OCI-LY7 (cell line): ENCODE measurements at regions of chr12 and their contacts with region 1.

Region 1: GRCh38 chr12:114508529-114509129 is 102.7 kb upstream of the TBX5 start:
- DNase-seq: peak; percentile 65
- H3K4me3 ChIP-seq: no peak overlapping the region
- H3K27ac ChIP-seq: no peak overlapping the region
- H3K4me1 ChIP-seq: no peaks in the 10 kb centered on the region
- CTCF ChIP-seq: peak; percentile 92

Region 2: DNA sequence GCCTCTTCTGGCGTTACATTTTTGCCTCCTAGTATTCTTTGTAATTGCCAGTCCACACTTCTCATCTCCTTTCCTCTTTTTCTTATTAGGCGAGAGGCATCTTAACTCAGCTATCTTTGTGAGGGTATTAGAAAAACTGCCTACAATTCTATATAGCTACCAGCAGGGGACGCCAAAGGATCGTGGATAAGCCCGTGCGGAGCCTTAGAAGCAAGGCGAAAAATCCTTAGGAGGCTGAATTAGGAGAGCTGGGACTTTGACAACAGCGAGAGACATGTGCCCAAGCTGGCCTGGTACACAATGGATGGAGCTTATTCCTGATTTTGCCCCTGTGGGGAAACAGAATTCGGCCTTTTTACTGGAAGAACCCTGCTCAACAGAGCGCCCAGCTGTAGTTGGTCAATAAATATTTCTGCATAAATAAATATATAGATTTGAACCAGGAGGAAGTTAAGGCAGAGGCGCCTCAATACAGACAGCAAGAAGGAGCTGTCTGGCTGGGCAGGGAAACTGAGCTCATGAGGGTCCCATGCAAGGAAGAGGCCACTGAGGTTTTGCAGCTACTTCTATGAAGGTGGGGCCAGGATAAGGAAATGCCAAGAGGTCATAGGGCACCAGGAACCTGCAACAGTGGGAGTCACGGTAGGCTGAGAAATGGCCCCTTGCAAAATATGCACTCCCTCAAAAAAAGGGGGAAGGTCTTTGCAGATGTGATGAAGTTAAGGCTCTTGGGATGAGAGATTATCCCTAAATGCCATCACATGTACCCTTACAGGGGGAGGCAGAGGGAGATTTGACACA is 527.9 kb before region 1 on chr12:
- CTCF ChIA-PET with region 1: no interaction called
- POLR2A ChIA-PET with region 1: no interaction called
- intact Hi-C with region 1: loop called (anchors 1 kb)
- DNase-seq: peak; percentile 66
- H3K4me3 ChIP-seq: no peak overlapping the region
- H3K27ac ChIP-seq: no peak overlapping the region
- H3K4me1 ChIP-seq: no peaks in the 10 kb centered on the region
- CTCF ChIP-seq: peak; percentile 98